Activated T-helper 2 cell treated with anti-CD3 and anti-CD28 coated beads, Interferon-gamma antibody, Interleukin-2, Interleukin-4, amounts not matched to agents 10 μg/mL and 5 μg/mL and 100 μg/mL, durations not matched to agents 14 hours and 24 hours and 36 hours (primary cell): ENCODE measurements at regions of chr19 and their contacts with region 1.

Region 1: DNA sequence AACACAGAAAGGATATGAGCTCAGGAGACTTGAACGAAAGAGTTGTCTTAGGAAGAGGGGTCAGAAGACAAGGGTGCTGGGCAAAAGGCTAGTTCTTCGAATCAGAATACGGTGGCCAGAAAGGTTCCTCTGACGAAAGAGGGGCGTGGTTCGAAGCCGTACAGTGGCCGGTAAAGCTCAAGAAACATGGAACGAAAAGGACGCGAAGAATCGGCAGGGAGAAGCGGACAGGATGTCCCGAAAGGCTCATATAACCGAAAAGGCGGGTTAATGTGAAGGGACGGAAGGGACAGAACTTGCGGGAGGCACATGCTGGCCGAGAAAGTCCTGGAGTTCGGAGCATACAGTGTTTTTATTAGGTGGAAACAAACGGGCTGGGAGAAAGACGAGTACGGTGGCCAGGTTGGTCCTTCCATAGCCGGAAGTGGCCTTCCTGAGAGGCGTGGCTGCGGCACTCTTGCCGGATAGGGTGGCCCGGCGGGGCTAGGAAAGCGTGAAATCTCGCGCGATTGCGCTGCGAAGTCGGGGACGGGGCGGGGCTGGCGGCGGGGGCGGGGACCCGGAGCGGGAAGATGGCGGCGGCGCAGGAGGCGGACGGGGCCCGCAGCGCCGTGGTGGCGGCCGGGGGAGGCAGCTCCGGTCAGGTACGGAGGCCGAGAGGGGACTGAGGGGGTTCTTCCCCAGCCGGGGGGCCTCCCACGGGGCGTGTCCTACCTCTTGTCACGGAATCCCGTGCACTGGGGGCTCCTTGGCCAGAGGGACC is at the start of gene CLPTM1:
- DNase-seq: peak; percentile 92
- H3K4me3 Mint-ChIP-seq: peak within 1 kb of the TSS; percentile 86
- H3K27ac Mint-ChIP-seq: peak within 1 kb of the TSS; percentile 97
- H3K4me1 Mint-ChIP-seq: peaks cover 25% of the 10 kb centered on the region
- H3K27me3 Mint-ChIP-seq: no peaks in the 10 kb centered on the region
- total RNA-seq, gene CLPTM1: 68.7 and 72.7 TPM in 2 replicates

Region 2: GRCh38 chr19:44890366-44891015 is 64.5 kb before region 1 on chr19:
- intact Hi-C with region 1: loop called (anchors 2 kb)
- DNase-seq: peak; percentile 100
- H3K4me3 Mint-ChIP-seq: peak overlapping the region; percentile 77
- H3K27ac Mint-ChIP-seq: peak overlapping the region; percentile 97
- H3K4me1 Mint-ChIP-seq: peaks cover 19% of the 10 kb centered on the region
- H3K27me3 Mint-ChIP-seq: no peaks in the 10 kb centered on the region

Region 3: DNA sequence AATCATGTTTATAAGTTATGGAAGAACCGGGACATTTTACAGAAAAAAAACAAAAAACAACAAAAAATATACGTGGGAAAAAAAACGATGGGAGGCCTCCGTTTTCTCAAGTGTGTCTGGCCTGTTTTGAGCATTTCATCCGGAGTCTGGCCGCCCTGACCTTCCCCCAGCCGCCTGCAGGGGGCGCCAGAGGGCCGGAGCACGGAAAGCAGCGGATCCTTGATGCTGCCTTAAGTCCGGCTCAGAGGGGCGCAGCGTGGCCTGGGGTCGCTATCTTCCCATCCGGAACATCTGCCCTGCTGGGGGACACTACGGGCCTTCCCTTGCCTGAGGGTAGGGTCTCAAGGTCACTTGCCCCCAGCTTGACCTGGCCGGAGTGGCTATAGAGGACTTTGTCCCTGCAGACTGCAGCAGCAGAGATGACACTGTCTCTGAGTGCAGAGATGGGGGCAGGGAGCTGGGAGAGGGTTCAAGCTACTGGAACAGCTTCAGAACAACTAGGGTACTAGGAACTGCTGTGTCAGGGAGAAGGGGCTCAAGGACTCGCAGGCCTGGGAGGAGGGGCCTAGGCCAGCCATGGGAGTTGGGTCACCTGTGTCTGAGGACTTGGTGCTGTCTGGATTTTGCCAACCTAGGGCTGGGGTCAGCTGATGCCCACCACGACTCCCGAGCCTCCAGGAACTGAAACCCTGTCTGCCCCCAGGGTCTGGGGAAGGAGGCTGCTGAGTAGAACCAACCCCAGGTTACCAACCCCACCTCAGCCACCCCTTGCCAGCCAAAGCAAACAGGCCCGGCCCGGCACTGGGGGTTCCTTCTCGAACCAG is 51.2 kb before region 1 on chr19:
- intact Hi-C with region 1: loop called (anchors 1 kb)
- DNase-seq: peak; percentile 62
- H3K4me3 Mint-ChIP-seq: no peak overlapping the region
- H3K27ac Mint-ChIP-seq: no peak overlapping the region
- H3K4me1 Mint-ChIP-seq: peaks cover 5% of the 10 kb centered on the region
- H3K27me3 Mint-ChIP-seq: peaks cover 7% of the 10 kb centered on the region

Region 4: DNA sequence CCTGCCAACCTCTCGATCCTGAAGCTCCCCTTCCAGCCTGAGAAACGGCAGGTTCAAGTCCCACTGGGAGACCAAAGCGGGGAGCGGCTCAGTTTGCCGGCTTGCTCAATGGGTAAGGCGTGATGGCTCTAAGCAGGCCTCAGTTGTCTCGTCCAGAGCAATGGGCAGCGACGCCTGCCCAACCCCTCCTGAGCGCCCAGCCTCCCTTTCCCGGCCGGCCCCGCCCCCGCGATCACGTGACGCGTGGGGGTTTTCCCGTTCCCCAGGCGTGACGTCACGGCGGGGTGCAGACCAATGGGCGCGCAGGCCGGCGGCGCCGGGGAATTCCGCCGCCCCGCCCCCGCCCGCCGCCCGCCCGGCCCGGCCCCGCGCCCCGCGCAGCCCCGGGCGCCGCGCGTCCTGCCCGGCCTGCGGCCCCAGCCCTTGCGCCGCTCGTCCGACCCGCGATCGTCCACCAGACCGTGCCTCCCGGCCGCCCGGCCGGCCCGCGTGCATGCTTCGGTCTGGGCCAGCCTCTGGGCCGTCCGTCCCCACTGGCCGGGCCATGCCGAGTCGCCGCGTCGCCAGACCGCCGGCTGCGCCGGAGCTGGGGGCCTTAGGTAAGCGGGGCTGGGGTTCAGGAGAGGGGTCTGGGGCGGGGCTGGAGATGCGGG is 46.2 kb after region 1 on chr19 and contains the start of gene RELB:
- intact Hi-C with region 1: loop called (anchors 1 kb)
- DNase-seq: peak; percentile 92
- H3K4me3 Mint-ChIP-seq: peak within 1 kb of the TSS; percentile 97
- H3K27ac Mint-ChIP-seq: peak within 1 kb of the TSS; percentile 100
- H3K4me1 Mint-ChIP-seq: peaks cover 12% of the 10 kb centered on the region
- H3K27me3 Mint-ChIP-seq: no peaks in the 10 kb centered on the region
- total RNA-seq, gene RELB: 62.7 and 70.3 TPM in 2 replicates